ENCODE measurements at regions of chr1 and their contacts with region 1.

Region 1: GRCh38 chr1:53393325-53393792 is 65.5 kb upstream of the LRP8 start:
- DNase-seq: peak; percentile 75
- H3K4me3 Mint-ChIP-seq: no peak overlapping the region
- H3K27ac Mint-ChIP-seq: no peak overlapping the region
- H3K4me1 Mint-ChIP-seq: no peaks in the 10 kb centered on the region
- H3K27me3 Mint-ChIP-seq: no peaks in the 10 kb centered on the region

Region 2: GRCh38 chr1:52615489-52616042 is 777.8 kb before region 1 on chr1:
- CTCF ChIA-PET with region 1: no interaction called
- intact Hi-C with region 1: no loop called
- DNase-seq: no peak
- H3K4me3 Mint-ChIP-seq: no peak overlapping the region
- H3K27ac Mint-ChIP-seq: no peak overlapping the region
- H3K4me1 Mint-ChIP-seq: peaks cover 9% of the 10 kb centered on the region
- H3K27me3 Mint-ChIP-seq: no peaks in the 10 kb centered on the region

Region 3: GRCh38 chr1:53238197-53239155 is 154.9 kb before region 1 on chr1 and contains the start of gene MAGOH:
- CTCF ChIA-PET with region 1: no interaction called
- intact Hi-C with region 1: loop called (anchors 1 kb)
- DNase-seq: peak; percentile 96
- H3K4me3 Mint-ChIP-seq: peak within 1 kb of the TSS; percentile 94
- H3K27ac Mint-ChIP-seq: peak within 1 kb of the TSS; percentile 82
- H3K4me1 Mint-ChIP-seq: peaks cover 28% of the 10 kb centered on the region
- H3K27me3 Mint-ChIP-seq: no peaks in the 10 kb centered on the region
- total RNA-seq, gene MAGOH: 83.7 to 87.2 TPM

Region 4: GRCh38 chr1:53266106-53266505 is 127.3 kb before region 1 on chr1:
- CTCF ChIA-PET with region 1: interaction called, 5 read pairs
- intact Hi-C with region 1: loop called (anchors 1 kb)
- DNase-seq: no peak
- H3K4me3 Mint-ChIP-seq: no peak overlapping the region
- H3K27ac Mint-ChIP-seq: no peak overlapping the region
- H3K4me1 Mint-ChIP-seq: no peaks in the 10 kb centered on the region
- H3K27me3 Mint-ChIP-seq: no peaks in the 10 kb centered on the region

Region 5: GRCh38 chr1:53278201-53278725 is 115.1 kb before region 1 on chr1:
- CTCF ChIA-PET with region 1: interaction called, 111 read pairs
- intact Hi-C with region 1: loop called (anchors 1 kb)
- DNase-seq: peak; percentile 79
- H3K4me3 Mint-ChIP-seq: no peak overlapping the region
- H3K27ac Mint-ChIP-seq: no peak overlapping the region
- H3K4me1 Mint-ChIP-seq: peaks cover 2% of the 10 kb centered on the region
- H3K27me3 Mint-ChIP-seq: no peaks in the 10 kb centered on the region

Region 6: DNA sequence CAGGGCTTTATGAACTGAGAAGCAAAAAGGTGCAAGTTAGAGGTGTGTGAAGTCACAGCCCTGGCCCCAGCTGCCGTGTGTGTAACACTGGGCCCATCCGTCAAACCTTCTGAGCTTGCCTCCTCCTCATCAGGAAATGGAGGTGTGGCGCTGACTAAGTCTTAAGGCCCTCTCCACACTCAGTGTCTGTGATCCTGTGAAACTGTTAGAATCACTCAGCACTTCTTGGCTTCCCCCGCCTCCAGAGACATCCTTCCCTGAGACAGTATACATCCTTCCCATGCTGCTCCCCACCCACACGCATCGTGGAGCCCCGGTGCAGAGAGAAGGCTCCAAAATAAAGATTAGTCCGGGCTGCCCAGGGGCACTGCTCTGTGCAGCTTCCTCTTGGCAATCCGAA is 98.8 kb before region 1 on chr1:
- CTCF ChIA-PET with region 1: interaction called, 4 read pairs
- intact Hi-C with region 1: loop called (anchors 5 kb)
- DNase-seq: peak; percentile 80
- H3K4me3 Mint-ChIP-seq: no peak overlapping the region
- H3K27ac Mint-ChIP-seq: peak overlapping the region; percentile 41
- H3K4me1 Mint-ChIP-seq: peaks cover 27% of the 10 kb centered on the region
- H3K27me3 Mint-ChIP-seq: no peaks in the 10 kb centered on the region

Region 7: DNA sequence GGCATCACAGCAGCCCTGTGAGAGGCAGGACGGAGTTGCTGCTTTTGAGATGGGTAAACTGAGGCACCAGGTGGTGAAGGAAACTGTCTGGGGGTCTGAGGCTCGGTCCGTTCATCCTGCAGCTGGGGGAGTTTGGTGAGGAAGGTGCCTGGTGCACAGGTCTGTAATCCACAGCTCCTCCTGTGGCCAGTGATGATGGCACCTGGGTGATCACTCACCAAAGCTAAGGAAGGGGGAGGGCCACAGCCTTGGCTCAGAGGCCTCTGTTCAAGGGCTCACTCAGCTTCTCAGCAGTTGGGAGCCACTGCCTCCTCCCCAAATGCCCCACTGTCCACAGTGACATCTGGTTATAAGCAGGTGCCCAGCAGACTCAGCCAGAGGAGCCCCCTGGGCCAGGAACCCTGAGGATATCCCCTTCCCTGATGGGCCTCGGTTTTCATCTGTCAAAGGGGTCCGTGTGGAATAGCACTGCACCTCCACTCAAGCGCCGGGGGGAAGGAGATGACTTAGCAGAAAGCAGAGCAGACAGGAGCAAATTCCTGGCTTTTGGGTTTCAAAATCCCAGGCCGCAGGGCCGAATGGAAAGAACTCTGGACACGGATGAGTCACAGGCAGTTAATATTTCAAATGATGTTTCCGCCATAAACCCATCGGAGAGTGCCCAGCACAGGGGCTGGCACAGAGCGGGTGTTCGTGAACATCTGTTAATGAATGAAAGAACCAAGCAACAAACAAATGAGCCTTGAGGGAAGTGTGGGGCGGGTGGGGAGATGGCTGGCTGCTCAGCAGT is 148.6 kb after region 1 on chr1:
- CTCF ChIA-PET with region 1: no interaction called
- intact Hi-C with region 1: no loop called
- DNase-seq: peak; percentile 20
- H3K4me3 Mint-ChIP-seq: no peak overlapping the region
- H3K27ac Mint-ChIP-seq: no peak overlapping the region
- H3K4me1 Mint-ChIP-seq: no peaks in the 10 kb centered on the region
- H3K27me3 Mint-ChIP-seq: no peaks in the 10 kb centered on the region